AG04450 (cell line): ENCODE measurements at regions of chr3 and their contacts with region 1.

Region 1: GRCh38 chr3:132730891-132731580 is 8.8 kb upstream of the NPHP3 start:
- DNase-seq: no peak
- H3K4me3 ChIP-seq: no peak overlapping the region
- H3K27ac ChIP-seq: no peak overlapping the region
- H3K27me3 ChIP-seq: no peaks in the 10 kb centered on the region
- CTCF ChIP-seq: peak; percentile 45

Region 2: GRCh38 chr3:133377396-133377795 is 646.4 kb after region 1 on chr3:
- CTCF ChIA-PET with region 1: interaction called, 42 read pairs
- POLR2A ChIA-PET with region 1: no interaction called
- DNase-seq: peak; percentile 53
- H3K4me3 ChIP-seq: no peak overlapping the region
- H3K27ac ChIP-seq: no peak overlapping the region
- H3K27me3 ChIP-seq: no peaks in the 10 kb centered on the region
- CTCF ChIP-seq: peak; percentile 75

Region 3: DNA sequence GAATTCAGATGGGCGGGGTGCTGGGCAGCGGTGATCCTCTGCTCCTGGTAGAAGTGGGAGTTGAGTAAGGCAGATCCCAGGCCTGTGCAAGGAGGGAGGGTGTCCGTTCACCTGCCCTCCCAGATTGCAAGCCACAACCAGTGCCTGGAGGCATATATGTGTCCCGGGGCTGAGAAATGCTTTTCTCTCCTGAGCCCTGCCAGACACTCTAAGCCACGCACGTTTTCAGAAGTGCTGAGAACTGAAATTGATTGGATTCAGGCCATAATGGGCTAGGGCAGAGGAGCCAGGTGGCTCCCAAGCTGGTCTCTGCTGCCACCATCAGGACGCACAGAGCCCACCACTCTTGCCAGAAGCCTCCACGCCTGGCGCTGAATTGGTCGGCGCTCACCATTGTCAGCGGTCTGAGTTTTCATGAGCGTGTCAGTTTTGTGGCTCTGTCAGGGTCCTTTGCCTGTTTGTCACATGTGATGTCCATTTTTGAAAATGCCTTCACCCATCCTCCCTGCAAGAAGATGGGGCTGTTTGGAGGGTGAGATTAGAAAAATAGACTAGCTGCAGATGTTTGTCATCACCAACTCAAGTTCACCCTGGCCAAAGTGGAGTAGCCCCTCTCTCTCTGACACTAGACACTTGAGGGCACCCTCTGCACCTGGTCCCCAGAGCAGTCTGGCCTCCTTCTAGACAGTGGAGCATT is 653.4 kb after region 1 on chr3:
- CTCF ChIA-PET with region 1: interaction called, 42 read pairs
- POLR2A ChIA-PET with region 1: no interaction called
- DNase-seq: peak; percentile 26
- H3K4me3 ChIP-seq: no peak overlapping the region
- H3K27ac ChIP-seq: no peak overlapping the region
- H3K27me3 ChIP-seq: no peaks in the 10 kb centered on the region
- CTCF ChIP-seq: peak; percentile 89

Region 4: GRCh38 chr3:133426721-133427120 is 695.7 kb after region 1 on chr3:
- CTCF ChIA-PET with region 1: interaction called, 42 read pairs
- POLR2A ChIA-PET with region 1: no interaction called
- DNase-seq: no peak
- H3K4me3 ChIP-seq: no peak overlapping the region
- H3K27ac ChIP-seq: no peak overlapping the region
- H3K27me3 ChIP-seq: no peaks in the 10 kb centered on the region
- CTCF ChIP-seq: no peak

Region 5: DNA sequence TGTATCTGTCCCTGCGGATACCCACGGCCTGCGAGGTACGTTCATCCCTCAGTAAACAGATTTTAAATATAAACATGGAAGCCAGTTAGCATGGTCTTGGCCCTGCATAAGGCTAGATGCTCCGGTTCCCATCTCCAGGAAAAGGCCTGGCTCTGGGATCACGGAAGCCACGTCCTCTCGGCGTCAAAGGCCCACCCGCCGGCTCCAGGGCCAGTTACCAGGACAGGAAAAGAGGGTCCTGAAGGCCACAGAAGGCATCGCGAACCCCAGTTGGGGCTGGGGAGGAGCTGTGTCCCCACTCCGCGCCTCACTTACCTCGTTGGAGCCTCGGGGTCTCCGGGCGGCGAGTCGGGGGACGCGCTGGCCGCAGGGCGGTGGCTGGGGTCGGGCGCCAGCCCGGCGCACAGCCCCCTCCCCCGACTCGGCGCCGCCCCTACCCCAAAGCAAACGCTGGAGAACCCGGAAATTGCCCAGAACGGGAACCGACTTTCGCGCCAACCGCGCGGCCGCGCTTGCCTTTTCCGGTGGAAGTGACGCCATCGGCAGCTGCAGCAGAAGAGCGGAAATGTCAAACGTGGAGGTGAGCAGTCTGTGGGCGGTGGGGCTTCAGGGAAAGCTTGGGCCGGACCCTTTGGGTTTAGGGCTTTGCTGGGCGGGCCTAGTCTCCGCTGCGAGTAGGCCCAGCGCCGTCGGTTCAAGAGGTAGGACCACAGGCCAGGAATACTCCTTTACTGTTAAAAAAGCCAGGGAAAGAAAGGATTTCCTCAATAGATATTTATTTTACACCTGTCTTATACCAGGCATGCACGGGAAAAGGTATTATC is 930.6 kb after region 1 on chr3 and contains the start of gene TOPBP1:
- CTCF ChIA-PET with region 1: interaction called, 12 read pairs
- POLR2A ChIA-PET with region 1: no interaction called
- DNase-seq: peak; percentile 29
- H3K4me3 ChIP-seq: peak within 1 kb of the TSS; percentile 97
- H3K27ac ChIP-seq: peak within 1 kb of the TSS; percentile 68
- H3K27me3 ChIP-seq: no peaks in the 10 kb centered on the region
- CTCF ChIP-seq: no peak
- polyA plus RNA-seq, gene TOPBP1: 17.6 and 25.9 TPM in 2 replicates